ENCODE measurements at regions of chr5 and their contacts with region 1.

Region 1: GRCh38 chr5:134004592-134005375 is at the start of gene VDAC1:
- DNase-seq: peak; percentile 90 to 96 (median 93)
- H3K4me3 ChIP-seq: peak within 1 kb of the TSS; percentile 66 to 84 (median 73)
- H3K27ac ChIP-seq: peak within 1 kb of the TSS; percentile 75 to 91
- H3K4me1 ChIP-seq: peaks cover 4 to 36% (median 26%) of the 10 kb centered on the region in 4 experiments
- H3K27me3 ChIP-seq: no peaks in the 10 kb centered on the region

Region 2: GRCh38 chr5:133825631-133826289 is 179.0 kb before region 1 on chr5:
- CTCF ChIA-PET with region 1: no interaction called
- POLR2A ChIA-PET with region 1: no interaction called
- DNase-seq: no peak
- H3K4me3 ChIP-seq: no peak overlapping the region
- H3K27ac ChIP-seq: no peak overlapping the region
- H3K4me1 ChIP-seq: peaks cover 0 to 3% (median 0%) of the 10 kb centered on the region in 4 experiments
- H3K27me3 ChIP-seq: peaks cover 0 to 4% (median 0%) of the 10 kb centered on the region in 5 experiments

Region 3: DNA sequence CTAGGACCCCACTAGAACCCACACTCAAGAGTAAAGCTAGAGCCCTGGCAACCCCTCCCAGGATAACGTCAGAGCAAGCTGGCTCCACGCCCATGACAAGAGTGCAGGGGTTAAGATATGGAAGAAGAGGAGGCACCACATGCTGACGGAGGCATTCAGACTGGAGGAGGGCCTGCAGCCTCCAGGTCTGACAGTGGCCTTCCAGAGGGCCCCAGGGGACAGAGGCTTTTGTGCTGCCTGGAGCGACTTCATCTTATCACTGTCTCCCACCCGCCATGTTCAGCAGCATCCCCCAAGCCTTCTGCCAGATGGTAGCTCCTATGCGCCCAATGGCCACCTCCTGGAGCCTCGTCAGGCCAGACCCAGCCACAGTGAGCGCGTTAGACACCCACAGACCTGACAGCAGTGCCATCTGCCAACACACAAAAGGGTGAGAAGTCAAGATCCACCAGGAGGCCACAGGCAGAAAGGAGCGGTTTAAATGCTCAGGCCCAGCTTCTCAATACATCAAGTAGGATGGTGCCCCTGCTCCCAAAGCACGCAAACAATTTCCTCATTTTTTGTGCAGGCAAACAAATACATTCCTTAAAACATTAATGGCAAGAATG is 102.2 kb before region 1 on chr5:
- CTCF ChIA-PET with region 1: no interaction called
- POLR2A ChIA-PET with region 1: no interaction called
- DNase-seq: peak in 1 of 3 donors; percentile 18
- H3K4me3 ChIP-seq: no peak overlapping the region
- H3K27ac ChIP-seq: no peak overlapping the region
- H3K4me1 ChIP-seq: peaks cover 0 to 4% (median 0%) of the 10 kb centered on the region in 4 experiments
- H3K27me3 ChIP-seq: no peaks in the 10 kb centered on the region

Region 4: DNA sequence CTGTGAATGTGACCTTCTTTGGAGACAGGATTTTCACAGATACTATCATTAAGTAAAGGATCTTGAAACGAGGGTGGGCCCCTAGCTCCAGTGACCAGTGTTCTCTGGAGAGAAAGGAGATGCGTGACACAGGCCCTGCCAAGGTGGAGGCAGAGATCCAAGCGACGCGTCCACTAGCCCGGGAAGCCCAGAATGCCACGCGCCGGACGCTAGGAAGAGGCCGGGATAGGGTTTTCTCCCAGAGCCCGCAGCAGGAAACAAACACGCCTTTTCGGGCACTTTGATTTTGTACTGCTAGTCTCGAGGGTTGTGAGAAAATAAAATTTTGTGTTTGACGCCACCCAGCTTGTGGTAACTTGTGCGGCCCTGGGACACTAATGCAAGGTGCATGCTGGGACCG is 29.5 kb after region 1 on chr5:
- CTCF ChIA-PET with region 1: interaction called, 14 read pairs
- POLR2A ChIA-PET with region 1: interaction called, 12 read pairs
- DNase-seq: no peak
- H3K4me3 ChIP-seq: no peak overlapping the region
- H3K27ac ChIP-seq: no peak overlapping the region
- H3K4me1 ChIP-seq: no peaks in the 10 kb centered on the region
- H3K27me3 ChIP-seq: no peaks in the 10 kb centered on the region

Region 5: DNA sequence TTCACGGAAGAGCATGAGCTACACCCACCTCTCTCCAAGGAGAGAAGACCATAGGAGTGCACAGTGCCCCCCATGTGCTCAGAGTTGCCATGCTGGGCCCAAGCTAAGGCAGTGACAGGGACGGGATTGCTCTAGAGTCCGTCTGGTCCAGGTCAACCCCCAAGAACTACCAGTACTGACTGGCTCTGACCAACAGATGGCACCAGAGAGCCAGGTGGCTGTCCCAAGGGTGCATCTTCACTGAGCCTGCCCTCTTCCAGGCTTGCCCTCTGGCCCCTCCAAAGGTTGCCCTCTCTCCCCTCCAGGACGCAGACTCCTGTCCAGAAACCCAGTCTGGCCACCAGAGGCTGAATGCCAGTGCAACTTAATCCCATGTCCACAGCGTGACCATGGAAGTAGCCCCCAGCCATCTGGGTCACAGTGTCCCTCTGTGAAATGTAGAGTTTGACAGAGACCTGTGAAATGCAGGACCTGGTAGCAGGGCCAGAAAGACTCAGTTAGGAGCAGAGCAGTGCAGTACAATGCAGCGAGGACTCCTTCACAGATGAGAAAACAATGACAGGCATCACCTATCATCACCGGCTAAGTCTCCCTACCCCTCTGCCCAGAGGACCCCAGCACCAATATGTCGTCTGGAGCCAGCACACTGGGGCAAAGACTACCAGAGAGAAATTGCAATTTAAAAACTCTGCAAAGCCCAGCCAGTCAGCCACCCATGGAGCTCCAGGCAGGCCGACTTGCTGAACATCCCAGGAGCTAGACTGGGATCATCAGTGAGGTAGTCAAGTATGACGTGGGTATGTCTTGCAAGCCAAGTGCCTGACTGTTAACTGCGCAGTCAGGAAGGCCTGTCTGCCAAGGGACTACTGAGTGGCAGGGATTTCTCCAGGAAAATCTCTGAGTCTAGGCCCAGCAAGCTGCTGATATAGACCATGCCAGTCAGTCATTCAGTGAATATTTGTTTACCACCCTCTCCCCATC is 179.7 kb after region 1 on chr5:
- CTCF ChIA-PET with region 1: no interaction called
- POLR2A ChIA-PET with region 1: no interaction called
- DNase-seq: peak; percentile 63 to 81 (median 71)
- H3K4me3 ChIP-seq: no peak overlapping the region
- H3K27ac ChIP-seq: no peak overlapping the region
- H3K4me1 ChIP-seq: no peaks in the 10 kb centered on the region
- H3K27me3 ChIP-seq: no peaks in the 10 kb centered on the region

Measured in common myeloid progenitor, CD34-positive (primary cell).